ENCODE measurements at regions of chr1 and their contacts with region 1.

Region 1: GRCh38 chr1:31715087-31715872 is 11.5 kb upstream of the COL16A1 start:
- DNase-seq: peak; percentile 99
- H3K4me3 ChIP-seq: peak overlapping the region; percentile 20 to 47 (median 38)
- H3K27ac ChIP-seq: peak overlapping the region; percentile 87 to 98 (median 96)
- H3K4me1 ChIP-seq: peaks cover 0 to 56% (median 47%) of the 10 kb centered on the region in 4 donors
- H3K27me3 ChIP-seq: no peaks in the 10 kb centered on the region
- CTCF ChIP-seq: peak; percentile 89 to 97 (median 92)
- EP300 ChIP-seq: no peak
- POLR2A ChIP-seq: peak; percentile 23 to 45

Region 2: DNA sequence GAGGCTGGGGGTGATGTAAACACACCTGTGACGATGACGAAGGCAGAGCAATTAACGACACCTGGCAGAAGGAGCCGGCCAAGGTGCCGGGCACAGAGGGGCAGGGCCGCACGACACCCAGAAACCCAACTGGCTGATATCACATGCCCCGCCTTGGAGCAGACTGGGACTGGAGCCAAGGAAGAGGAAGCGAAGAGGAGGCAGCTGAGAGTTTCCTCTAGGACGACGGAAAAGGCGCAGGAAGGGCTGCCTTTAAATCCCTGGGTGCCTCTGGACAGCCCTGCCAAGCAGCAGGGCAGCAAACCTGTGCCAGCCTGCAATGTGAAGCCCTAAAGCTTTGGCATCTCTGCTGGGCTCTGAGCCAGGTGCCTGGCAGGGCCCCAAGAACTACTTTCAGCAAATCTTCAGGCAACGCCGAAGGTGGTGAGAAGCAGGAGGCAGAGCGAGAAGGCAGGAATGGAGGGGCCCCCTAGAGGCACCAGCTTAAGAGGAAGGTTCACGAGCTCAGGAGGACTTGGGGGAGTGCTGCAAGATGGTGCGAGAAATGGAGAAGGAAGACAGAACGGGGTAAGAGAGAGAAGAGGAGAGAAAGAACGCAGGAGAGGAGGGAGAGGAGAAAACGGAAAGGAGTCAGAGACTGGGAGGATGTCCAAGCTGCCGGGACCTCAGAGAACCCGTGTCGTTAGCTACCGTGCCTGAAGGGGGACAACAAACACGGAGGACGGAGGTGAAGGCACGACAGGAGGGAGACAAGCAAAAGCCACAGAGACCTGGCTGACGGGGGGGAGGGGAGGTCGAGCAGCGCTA is 45.3 kb before region 1 on chr1:
- intact Hi-C with region 1: loop called (anchors 2 kb)
- DNase-seq: peak; percentile 94
- H3K4me3 ChIP-seq: peak overlapping the region in 3 of 4 donors; percentile 26 to 32 (median 28)
- H3K27ac ChIP-seq: peak overlapping the region; percentile 77 to 82 (median 80)
- H3K4me1 ChIP-seq: peaks cover 0 to 95% (median 82%) of the 10 kb centered on the region in 4 donors
- H3K27me3 ChIP-seq: no peaks in the 10 kb centered on the region
- CTCF ChIP-seq: peak in 1 of 4 experiments; percentile 26
- EP300 ChIP-seq: no peak
- POLR2A ChIP-seq: peak in 1 of 2 donors; percentile 11

Measured in sigmoid colon (tissue), 7 donors.